ENCODE measurements at regions of chr17 and their contacts with region 1.

Region 1: GRCh38 chr17:43576563-43577229 is 30.6 kb upstream of the ETV4 start:
- DNase-seq: peak; percentile 88
- ATAC-seq: peak; percentile 73
- H3K4me3 ChIP-seq: peak overlapping the region in 1 of 3 experiments; percentile 30; a peak in 1 of 6 replicates
- H3K27ac ChIP-seq: peak overlapping the region; percentile 45
- H3K4me1 ChIP-seq: peaks cover 99% of the 10 kb centered on the region
- H3K27me3 ChIP-seq: no peaks in the 10 kb centered on the region
- CTCF ChIP-seq: peak; percentile 99
- EP300 ChIP-seq: peak; percentile 51 to 64; a peak in 3 of 4 replicates
- POLR2A ChIP-seq: no peak
- RAD21 ChIP-seq: peak; percentile 99

Region 2: GRCh38 chr17:43517615-43518386 is 58.9 kb before region 1 on chr17:
- CTCF ChIA-PET with region 1: interaction called, 8 read pairs
- POLR2A ChIA-PET with region 1: interaction called, 3 read pairs
- in situ Hi-C with region 1: no loop called
- intact Hi-C with region 1: loop called (anchors 1 kb)
- DNase-seq: no peak
- ATAC-seq: no peak
- H3K4me3 ChIP-seq: no peak overlapping the region
- H3K27ac ChIP-seq: no peak overlapping the region
- H3K4me1 ChIP-seq: peaks cover 27% of the 10 kb centered on the region
- H3K27me3 ChIP-seq: no peaks in the 10 kb centered on the region
- CTCF ChIP-seq: no peak
- EP300 ChIP-seq: no peak
- POLR2A ChIP-seq: no peak
- RAD21 ChIP-seq: no peak

Region 3: DNA sequence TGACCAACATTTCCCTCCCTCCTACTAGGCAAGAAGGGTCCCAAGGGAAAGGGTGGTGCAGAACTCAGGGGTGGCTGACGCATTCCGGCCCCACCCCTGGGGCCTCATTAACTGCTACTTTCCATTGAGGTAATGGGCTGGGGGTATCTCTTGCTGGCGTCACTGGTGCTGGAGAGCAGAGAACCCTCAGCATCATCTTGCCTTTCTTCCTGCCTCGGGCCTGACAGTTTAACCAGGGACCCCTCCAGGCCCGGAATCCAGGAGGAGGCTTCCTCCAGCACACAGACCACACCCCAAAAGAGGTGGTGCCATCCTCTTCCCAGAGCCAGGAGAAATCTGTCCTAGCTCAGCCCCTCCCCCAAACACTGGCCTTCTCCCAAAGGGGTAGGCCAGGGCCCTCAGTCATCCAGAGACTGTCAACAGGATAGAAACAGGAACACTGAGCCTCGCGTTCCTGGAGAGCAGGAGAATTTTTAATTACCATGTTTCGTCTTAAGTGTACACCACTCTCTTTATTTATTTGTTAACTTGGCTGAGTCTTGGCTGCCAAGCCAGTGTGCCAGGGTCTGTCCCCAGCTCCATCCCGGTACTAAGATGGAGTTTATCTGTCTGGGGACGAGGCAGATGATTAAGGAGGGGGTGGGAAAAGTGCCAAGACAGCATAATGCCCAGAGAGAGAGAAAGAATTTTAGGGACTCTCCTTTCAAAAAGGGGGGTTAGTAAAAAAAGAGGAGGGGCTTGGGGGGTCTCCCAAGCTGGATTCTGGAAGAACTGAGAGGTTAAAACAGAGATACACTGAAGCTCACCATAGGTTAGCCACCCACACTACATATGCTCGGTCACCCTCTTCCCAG is 35.6 kb before region 1 on chr17:
- CTCF ChIA-PET with region 1: interaction called, 3 read pairs
- POLR2A ChIA-PET with region 1: interaction called, 72 read pairs
- in situ Hi-C with region 1: no loop called
- intact Hi-C with region 1: loop called (anchors 1 kb)
- DNase-seq: no peak
- ATAC-seq: no peak
- H3K4me3 ChIP-seq: peak overlapping the region in 2 of 3 experiments; percentile 31 to 84; a peak in 4 of 6 replicates
- H3K27ac ChIP-seq: peak overlapping the region; percentile 100
- H3K4me1 ChIP-seq: peaks cover 72% of the 10 kb centered on the region
- H3K27me3 ChIP-seq: peaks cover 0 to 7% of the 10 kb centered on the region in 2 experiments; a peak in 1 of 5 replicates
- CTCF ChIP-seq: no peak
- EP300 ChIP-seq: no peak
- POLR2A ChIP-seq: peak in 1 of 2 experiments; percentile 34; a peak in 2 of 4 replicates
- RAD21 ChIP-seq: no peak

Region 4: GRCh38 chr17:43556292-43556691 is 20.4 kb before region 1 on chr17:
- CTCF ChIA-PET with region 1: no interaction called
- POLR2A ChIA-PET with region 1: interaction called, 60 read pairs
- in situ Hi-C with region 1: no loop called
- intact Hi-C with region 1: loop called (anchors 1 kb)
- DNase-seq: no peak
- ATAC-seq: no peak
- H3K4me3 ChIP-seq: no peak overlapping the region
- H3K27ac ChIP-seq: peak overlapping the region; percentile 45
- H3K4me1 ChIP-seq: peaks cover 100% of the 10 kb centered on the region
- H3K27me3 ChIP-seq: no peaks in the 10 kb centered on the region
- CTCF ChIP-seq: no peak
- EP300 ChIP-seq: no peak
- POLR2A ChIP-seq: no peak
- RAD21 ChIP-seq: no peak

Region 5: GRCh38 chr17:43673516-43674323 is 97.0 kb after region 1 on chr17:
- CTCF ChIA-PET with region 1: interaction called, 4 read pairs
- POLR2A ChIA-PET with region 1: interaction called, 30 read pairs
- in situ Hi-C with region 1: no loop called
- intact Hi-C with region 1: loop called (anchors 1 kb)
- DNase-seq: peak; percentile 67
- ATAC-seq: peak; percentile 55
- H3K4me3 ChIP-seq: no peak overlapping the region
- H3K27ac ChIP-seq: no peak overlapping the region
- H3K4me1 ChIP-seq: peaks cover 100% of the 10 kb centered on the region
- H3K27me3 ChIP-seq: no peaks in the 10 kb centered on the region
- CTCF ChIP-seq: peak; percentile 94
- EP300 ChIP-seq: no peak
- POLR2A ChIP-seq: no peak
- RAD21 ChIP-seq: peak; percentile 97

Measured in HepG2 (cell line).